Left lung (tissue), 14 donors: ENCODE measurements at regions of chr17 and their contacts with region 1.

Region 1: GRCh38 chr17:42843358-42843934 is 934 bp upstream of the AOC2 start:
- DNase-seq: peak in 1 of 4 donors; percentile 73
- ATAC-seq: peak; percentile 85
- H3K4me3 ChIP-seq: no peak overlapping the region
- H3K27ac ChIP-seq: peak overlapping the region; percentile 1 to 7
- H3K4me1 ChIP-seq: peaks cover 0 to 61% of the 10 kb centered on the region in 2 donors
- H3K27me3 ChIP-seq: no peaks in the 10 kb centered on the region
- CTCF ChIP-seq: peak; percentile 75 to 91

Region 2: DNA sequence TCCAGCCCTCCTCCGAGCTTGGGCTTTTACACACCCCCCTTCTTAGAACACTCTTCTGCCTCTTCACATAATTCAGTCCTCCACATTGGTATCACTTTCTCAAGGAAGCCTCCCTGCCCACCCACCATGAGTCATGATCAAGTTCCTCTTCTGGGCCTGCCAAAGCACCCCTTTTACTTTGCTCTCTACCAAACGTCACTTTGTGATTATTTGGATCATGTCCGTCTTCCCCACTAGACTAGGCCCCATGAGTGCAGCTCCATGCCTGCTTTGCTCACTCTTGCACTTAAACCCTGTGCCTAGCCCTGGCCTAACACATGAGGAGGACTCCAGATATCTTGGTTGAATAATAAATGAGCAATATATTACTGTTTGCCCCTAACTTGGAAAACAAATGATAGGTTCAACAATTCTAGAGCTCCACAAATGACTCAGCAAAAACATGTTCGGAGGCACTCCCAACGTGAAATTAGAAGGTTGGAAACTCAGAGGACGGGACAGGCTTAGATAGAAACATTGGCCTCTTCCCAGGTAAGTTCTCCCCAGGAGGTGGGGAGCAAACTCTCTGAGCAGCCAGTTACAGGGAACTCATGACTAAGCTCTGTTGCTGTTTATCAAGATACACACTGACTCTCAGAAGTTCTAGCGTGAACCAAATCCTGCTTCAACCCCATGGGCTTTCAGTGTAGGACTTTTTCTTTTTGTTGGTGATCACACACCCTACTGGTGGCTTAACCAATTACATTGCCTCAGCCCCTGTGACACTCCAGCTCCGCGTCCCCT is 85.5 kb after region 1 on chr17:
- intact Hi-C with region 1: loop called (anchors 5 to 10 kb)
- DNase-seq: peak in 3 of 4 donors; percentile 52 to 83 (median 61)
- ATAC-seq: peak; percentile 96
- H3K4me3 ChIP-seq: no peak overlapping the region
- H3K27ac ChIP-seq: peak overlapping the region; percentile 75 to 86
- H3K4me1 ChIP-seq: peaks cover 7 to 23% of the 10 kb centered on the region in 2 donors
- H3K27me3 ChIP-seq: no peaks in the 10 kb centered on the region
- CTCF ChIP-seq: peak; percentile 61 to 74

Region 3: DNA sequence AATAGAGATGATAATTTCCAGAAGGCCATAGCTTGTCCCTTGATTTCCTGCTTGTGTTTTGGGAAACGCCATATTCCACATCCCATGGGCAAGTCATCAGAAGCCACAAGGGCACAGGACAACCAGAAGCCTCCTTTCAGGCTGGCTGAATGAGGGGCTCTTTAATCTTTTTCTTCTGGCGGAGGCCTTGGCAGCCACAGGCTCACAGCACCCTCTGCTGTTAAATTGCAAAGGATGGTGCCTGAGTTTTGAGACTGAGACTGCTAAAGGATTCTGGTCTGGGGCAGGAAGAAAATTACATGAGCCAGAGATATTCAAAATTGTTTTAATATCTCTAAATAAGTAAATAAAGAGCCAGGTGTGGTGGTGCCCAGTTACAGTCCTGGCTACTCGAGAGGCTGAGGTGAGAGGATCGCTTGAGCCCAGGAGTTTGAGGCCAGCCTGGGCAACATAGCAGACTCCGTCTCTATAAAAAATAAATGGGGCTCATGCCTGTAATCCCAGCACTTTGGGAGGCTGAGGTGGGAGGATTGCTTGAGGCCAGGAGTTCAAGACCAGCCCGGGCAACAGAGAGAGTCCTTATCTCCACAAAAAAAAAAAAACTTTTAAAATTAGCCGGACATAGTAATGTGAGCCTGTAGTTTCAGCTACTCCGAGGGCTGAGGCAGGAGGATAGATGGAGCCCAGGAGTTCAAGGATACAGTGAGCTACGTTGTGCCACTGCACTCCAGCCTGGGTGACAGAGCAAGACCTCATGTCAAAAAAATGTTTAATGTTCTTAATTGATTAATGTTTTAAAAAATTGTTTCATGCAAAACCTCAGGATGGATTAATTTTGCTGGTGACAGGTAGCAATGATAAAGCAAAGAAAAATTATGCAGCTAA is 94.5 kb after region 1 on chr17:
- intact Hi-C with region 1: loop called in 1 of 2 experiments (anchors 10 kb)
- DNase-seq: peak in 1 of 4 donors; percentile 73
- ATAC-seq: peak; percentile 84
- H3K4me3 ChIP-seq: no peak overlapping the region
- H3K27ac ChIP-seq: no peak overlapping the region
- H3K4me1 ChIP-seq: no peaks in the 10 kb centered on the region
- H3K27me3 ChIP-seq: no peaks in the 10 kb centered on the region
- CTCF ChIP-seq: peak; percentile 34 to 37